CD4-positive, alpha-beta memory T cell (primary cell): ENCODE measurements at regions of chr12 and their contacts with region 1.

Region 1: DNA sequence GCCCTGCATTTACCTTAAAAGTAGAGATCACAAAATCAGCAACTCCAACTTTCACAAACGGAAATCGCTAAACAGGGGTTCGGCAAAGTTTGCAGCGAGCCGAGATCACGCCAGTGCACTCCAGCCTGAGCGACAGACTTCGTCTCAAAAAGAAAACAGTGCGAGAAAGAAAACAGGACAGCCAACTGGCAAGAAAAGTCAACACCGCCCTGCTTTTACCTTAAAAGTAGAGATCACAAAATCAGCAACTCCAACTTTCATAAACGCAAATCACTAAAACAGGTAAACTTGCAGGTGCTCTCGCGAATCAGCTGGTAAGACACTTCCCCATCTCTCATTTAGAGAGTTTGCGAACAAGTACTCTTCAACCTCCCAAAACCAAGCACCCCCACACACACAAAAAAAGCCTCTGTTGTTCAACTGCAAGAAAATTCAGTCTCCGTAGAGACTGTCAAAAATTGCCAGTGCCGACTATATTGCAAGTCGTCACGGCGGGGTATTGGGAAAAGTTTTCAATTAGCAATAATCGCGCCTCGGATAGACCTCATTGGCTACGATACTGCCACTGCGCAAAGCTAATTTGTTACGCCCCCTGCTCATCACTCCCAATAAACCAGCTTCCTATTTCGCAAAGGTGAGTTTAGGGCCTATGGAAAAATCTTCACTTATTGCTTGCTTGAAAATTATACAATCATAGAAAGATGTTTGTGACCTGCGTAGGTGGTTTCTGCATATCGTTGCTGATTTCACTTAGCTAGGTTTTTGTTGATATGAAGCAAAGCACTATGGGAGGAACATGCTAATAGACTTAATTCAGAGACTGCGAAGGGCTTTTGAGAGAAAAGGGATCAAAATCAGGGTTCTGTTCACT is at the start of gene RNU4-1:
- DNase-seq: peak; percentile 87 to 93 (median 91)
- H3K4me3 ChIP-seq: peak within 1 kb of the TSS; percentile 86 to 96
- H3K4me3 Mint-ChIP-seq: no peak within 1 kb of the TSS
- H3K27ac ChIP-seq: peak within 1 kb of the TSS; percentile 99
- H3K27ac Mint-ChIP-seq: no peak within 1 kb of the TSS
- H3K4me1 ChIP-seq: peaks cover 18% of the 10 kb centered on the region
- H3K4me1 Mint-ChIP-seq: peaks cover 6 to 13% (median 8%) of the 10 kb centered on the region in 4 donors
- H3K27me3 ChIP-seq: no peaks in the 10 kb centered on the region
- H3K27me3 Mint-ChIP-seq: no peaks in the 10 kb centered on the region
- total RNA-seq, gene RNU4-1: 925 to 1,200 TPM

Region 2: DNA sequence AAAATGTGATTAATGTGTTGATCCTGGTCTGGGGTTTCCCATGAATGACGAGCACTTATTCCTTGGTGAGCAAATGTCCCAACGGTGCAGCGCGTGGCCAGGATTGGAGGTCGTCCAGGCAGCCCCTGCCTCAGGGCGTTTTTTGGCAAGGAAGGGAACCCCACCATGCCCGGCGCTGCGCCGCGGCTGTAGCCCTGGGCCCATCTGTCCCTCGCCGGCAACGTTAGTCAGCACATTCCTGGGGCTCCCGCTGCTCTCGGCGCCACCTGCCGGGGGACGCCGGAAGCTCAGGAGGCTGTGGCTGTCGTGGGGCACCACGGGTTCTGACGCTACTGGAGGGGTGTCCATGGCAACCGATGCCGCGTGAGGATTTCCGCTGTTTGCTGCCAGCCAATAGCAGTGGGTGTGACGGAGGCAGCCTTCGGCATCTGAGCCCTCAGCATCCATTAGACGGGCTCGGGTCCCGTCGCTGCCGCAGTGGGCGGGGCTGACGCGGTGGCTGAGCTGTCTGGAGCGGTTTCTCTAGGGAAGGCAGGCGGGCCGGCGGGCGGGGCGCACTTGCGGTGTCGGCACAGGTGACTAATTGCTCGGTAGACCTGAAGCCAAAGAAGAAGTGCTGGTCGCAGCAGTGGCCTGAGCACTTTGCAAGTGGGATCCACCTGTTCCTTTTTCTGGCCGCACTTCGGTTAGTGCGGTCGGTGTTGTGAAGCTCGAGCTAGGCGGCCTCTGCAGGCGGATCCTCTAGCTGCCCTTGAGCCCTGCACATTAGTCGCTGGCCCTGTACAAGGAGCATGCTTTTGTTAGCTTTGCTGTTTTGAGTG is 205.9 kb before region 1 on chr12:
- CTCF ChIA-PET with region 1: no interaction called
- POLR2A ChIA-PET with region 1: interaction called, 6 read pairs
- intact Hi-C with region 1: loop called (anchors 1 kb)
- DNase-seq: peak; percentile 99 to 100 (median 100)
- H3K4me3 ChIP-seq: peak overlapping the region; percentile 49 to 52
- H3K4me3 Mint-ChIP-seq: peak overlapping the region; percentile 69 to 86 (median 83)
- H3K27ac ChIP-seq: peak overlapping the region; percentile 58
- H3K27ac Mint-ChIP-seq: peak overlapping the region; percentile 92 to 95 (median 93)
- H3K4me1 ChIP-seq: peaks cover 12% of the 10 kb centered on the region
- H3K4me1 Mint-ChIP-seq: peaks cover 7 to 26% (median 18%) of the 10 kb centered on the region in 4 donors
- H3K27me3 ChIP-seq: no peaks in the 10 kb centered on the region
- H3K27me3 Mint-ChIP-seq: no peaks in the 10 kb centered on the region

Region 3: DNA sequence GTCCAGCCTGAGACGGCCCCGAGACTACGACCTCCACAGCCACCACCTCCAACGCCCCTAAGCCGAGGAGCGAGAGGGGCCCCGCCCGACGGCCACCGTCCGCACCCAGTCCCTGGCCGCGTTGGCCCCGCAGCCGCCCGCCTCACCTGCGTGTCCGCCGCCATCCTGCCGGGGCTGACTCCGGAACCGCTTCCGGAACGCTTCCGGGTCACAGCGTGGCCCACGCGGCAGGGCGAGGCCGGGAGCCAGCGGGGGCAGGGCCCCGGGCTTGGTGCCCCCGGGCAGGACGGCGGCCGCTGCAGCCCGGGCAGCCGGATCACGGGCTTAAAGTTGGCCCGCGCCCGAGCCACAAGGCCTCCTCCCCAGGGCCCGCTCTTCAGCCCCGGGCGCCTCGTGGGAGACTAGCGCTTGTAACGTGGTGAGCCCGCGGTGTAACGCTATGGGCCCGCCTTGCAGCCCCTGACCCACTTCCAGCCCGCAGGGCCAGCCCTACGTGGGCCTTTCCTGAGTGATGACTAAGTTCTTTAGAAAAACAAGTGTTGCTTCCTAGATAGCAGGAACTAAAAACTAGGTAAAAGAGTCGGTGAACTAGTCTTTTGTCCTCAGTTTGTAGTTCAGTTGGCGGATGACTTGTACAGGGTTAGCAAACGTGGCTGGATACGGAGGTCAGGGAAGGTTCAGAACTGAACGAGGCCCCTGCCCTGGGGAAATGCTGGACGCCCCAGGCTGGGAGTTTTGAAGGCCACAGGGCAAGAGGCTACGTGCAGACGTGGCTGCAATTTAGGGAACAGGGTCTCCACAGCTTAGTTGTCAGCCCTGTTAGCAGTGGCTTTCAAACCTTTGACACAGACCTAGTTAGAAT is 98.1 kb before region 1 on chr12 and contains the start of gene GCN1:
- CTCF ChIA-PET with region 1: no interaction called
- POLR2A ChIA-PET with region 1: interaction called, 241 read pairs
- intact Hi-C with region 1: no loop called
- DNase-seq: peak; percentile 87 to 92 (median 89)
- H3K4me3 ChIP-seq: peak within 1 kb of the TSS; percentile 74 to 89
- H3K4me3 Mint-ChIP-seq: peak within 1 kb of the TSS; percentile 86 to 93 (median 90)
- H3K27ac ChIP-seq: peak within 1 kb of the TSS; percentile 79
- H3K27ac Mint-ChIP-seq: peak within 1 kb of the TSS; percentile 97 to 98 (median 98)
- H3K4me1 ChIP-seq: peaks cover 55% of the 10 kb centered on the region
- H3K4me1 Mint-ChIP-seq: peaks cover 30 to 70% (median 40%) of the 10 kb centered on the region in 4 donors
- H3K27me3 ChIP-seq: no peaks in the 10 kb centered on the region
- H3K27me3 Mint-ChIP-seq: no peaks in the 10 kb centered on the region
- total RNA-seq, gene GCN1: 127 to 132 TPM

Region 4: DNA sequence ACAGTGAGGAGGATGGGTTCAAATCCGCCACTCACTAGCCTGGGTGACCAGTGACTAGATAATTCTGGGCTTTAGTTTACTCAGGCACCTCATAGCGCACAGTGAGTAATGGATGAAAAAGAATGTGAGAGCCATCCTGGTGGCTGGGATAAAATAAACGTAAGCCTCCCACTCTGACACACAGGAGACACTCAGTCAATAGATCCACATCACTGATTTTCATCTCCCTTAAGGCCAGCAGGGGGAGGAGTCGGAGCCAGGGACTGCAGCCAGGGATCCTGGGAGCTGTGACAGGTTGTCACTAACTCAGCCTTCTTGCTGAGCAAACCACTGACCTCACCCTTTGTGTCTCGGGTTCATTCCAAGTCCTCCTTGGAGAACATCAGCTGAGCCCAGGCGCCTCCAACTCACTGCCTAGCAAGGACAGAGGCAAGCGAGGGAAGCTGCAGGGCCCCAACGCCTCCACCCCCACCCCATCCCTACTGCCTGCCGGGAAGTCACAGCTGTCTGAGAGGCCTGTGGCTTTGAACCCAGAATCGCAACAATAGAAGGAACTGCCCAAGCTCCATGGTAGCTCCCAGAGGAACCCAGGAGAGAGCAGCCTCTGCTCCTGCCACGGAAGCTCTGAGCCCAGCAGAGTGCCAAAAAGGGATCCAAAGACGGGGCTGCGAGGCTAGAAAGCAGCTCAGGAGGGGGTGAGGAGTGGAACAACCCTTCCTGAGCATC is 58.1 kb before region 1 on chr12:
- CTCF ChIA-PET with region 1: interaction called, 4 read pairs
- POLR2A ChIA-PET with region 1: interaction called, 177 read pairs
- intact Hi-C with region 1: no loop called
- DNase-seq: no peak
- H3K4me3 ChIP-seq: no peak overlapping the region
- H3K4me3 Mint-ChIP-seq: peak overlapping the region in 2 of 8 donors; percentile 7 to 39
- H3K27ac ChIP-seq: no peak overlapping the region
- H3K27ac Mint-ChIP-seq: peak overlapping the region; percentile 27 to 92 (median 73)
- H3K4me1 ChIP-seq: peaks cover 94% of the 10 kb centered on the region
- H3K4me1 Mint-ChIP-seq: peaks cover 51 to 96% (median 78%) of the 10 kb centered on the region in 4 donors
- H3K27me3 ChIP-seq: no peaks in the 10 kb centered on the region
- H3K27me3 Mint-ChIP-seq: no peaks in the 10 kb centered on the region

Region 5: DNA sequence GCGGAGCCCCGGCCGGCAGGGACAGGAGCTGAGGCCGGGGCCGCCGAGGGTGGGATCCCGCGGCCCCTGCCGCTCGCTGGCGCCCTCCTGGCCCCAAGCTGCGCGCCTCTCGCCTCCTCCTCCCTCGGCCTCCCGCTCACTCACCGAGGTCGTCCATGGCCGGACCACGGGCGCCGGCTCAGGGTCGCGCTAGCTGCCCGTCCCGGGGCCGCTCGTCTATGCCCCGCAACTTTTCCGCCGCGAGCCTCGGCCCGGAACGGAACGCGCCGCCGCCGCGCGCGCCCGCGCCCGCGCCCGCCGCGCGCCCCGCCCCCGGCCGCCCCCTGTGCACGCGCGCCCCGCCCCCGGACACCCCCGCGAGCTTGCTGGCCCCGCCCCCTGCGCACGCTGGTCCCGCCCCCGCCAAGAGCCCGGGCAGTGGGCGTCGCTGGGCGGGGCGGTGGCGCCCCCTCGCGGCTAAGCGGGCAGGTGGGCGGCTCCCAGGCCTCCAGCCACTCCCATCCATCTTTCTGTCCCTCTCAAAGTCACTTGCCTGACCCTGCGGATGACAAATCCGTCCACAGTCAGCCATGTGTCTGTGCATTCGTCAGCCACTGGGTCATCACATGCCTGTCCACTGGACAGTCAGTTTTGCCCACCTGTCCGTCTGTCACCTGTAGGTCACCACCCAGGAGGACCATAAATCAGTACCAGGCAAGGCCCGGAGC is 27.3 kb before region 1 on chr12 and contains the start of gene PXN:
- CTCF ChIA-PET with region 1: interaction called, 32 read pairs
- POLR2A ChIA-PET with region 1: interaction called, 176 read pairs
- intact Hi-C with region 1: loop called (anchors 1 kb)
- DNase-seq: peak; percentile 84 to 93 (median 89)
- H3K4me3 ChIP-seq: peak within 1 kb of the TSS; percentile 59 to 85
- H3K4me3 Mint-ChIP-seq: peak within 1 kb of the TSS; percentile 89 to 100 (median 94)
- H3K27ac ChIP-seq: peak within 1 kb of the TSS; percentile 81
- H3K27ac Mint-ChIP-seq: peak within 1 kb of the TSS; percentile 92 to 98 (median 96)
- H3K4me1 ChIP-seq: peaks cover 44% of the 10 kb centered on the region
- H3K4me1 Mint-ChIP-seq: peaks cover 24 to 51% (median 37%) of the 10 kb centered on the region in 4 donors
- H3K27me3 ChIP-seq: no peaks in the 10 kb centered on the region
- H3K27me3 Mint-ChIP-seq: no peaks in the 10 kb centered on the region
- total RNA-seq, gene PXN: 108 to 126 TPM

Region 6: GRCh38 chr12:120469450-120470149 is 176.7 kb after region 1 on chr12 and contains the start of gene SRSF9:
- CTCF ChIA-PET with region 1: interaction called, 3 read pairs
- POLR2A ChIA-PET with region 1: interaction called, 17 read pairs
- intact Hi-C with region 1: no loop called
- DNase-seq: peak; percentile 97 to 98 (median 97)
- H3K4me3 ChIP-seq: peak within 1 kb of the TSS; percentile 75 to 84
- H3K4me3 Mint-ChIP-seq: peak within 1 kb of the TSS; percentile 87 to 94 (median 91)
- H3K27ac ChIP-seq: peak within 1 kb of the TSS; percentile 79
- H3K27ac Mint-ChIP-seq: peak within 1 kb of the TSS; percentile 89 to 97 (median 92)
- H3K4me1 ChIP-seq: peaks cover 40% of the 10 kb centered on the region
- H3K4me1 Mint-ChIP-seq: peaks cover 10 to 62% (median 35%) of the 10 kb centered on the region in 4 donors
- H3K27me3 ChIP-seq: no peaks in the 10 kb centered on the region
- H3K27me3 Mint-ChIP-seq: no peaks in the 10 kb centered on the region
- total RNA-seq, gene SRSF9: 139 to 143 TPM

Region 7: DNA sequence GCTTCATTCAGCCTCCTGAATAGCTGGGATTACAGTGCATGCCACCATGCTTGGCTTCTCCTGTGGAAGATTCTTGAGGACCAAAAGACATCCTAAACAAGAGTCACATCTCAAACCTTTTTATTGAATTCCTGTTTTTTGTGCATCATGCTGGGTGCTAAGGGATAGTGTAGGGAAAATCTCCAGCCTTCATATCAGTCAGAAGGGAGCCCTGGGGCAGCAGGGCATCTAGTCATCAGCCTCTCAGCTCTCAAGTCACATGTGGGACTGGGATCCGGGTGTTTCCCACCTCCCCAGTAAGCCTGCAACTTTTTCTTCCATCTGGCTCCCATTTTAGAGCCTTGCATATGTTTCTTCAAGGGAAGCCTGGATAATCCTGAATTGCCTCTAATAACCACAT is 771.2 kb after region 1 on chr12:
- CTCF ChIA-PET with region 1: no interaction called
- POLR2A ChIA-PET with region 1: no interaction called
- intact Hi-C with region 1: no loop called
- DNase-seq: no peak
- H3K4me3 ChIP-seq: no peak overlapping the region
- H3K4me3 Mint-ChIP-seq: no peak overlapping the region
- H3K27ac ChIP-seq: no peak overlapping the region
- H3K27ac Mint-ChIP-seq: no peak overlapping the region
- H3K4me1 ChIP-seq: peaks cover 4% of the 10 kb centered on the region
- H3K4me1 Mint-ChIP-seq: peaks cover 11 to 16% (median 11%) of the 10 kb centered on the region in 4 donors
- H3K27me3 ChIP-seq: no peaks in the 10 kb centered on the region
- H3K27me3 Mint-ChIP-seq: no peaks in the 10 kb centered on the region

Region 8: GRCh38 chr12:121793838-121794533 is 1501.1 kb after region 1 on chr12:
- CTCF ChIA-PET with region 1: no interaction called
- POLR2A ChIA-PET with region 1: no interaction called
- intact Hi-C with region 1: loop called (anchors 5 kb)
- DNase-seq: peak; percentile 94 to 98 (median 95)
- H3K4me3 ChIP-seq: peak overlapping the region; percentile 67 to 99
- H3K4me3 Mint-ChIP-seq: peak overlapping the region; percentile 78 to 94 (median 87)
- H3K27ac ChIP-seq: peak overlapping the region; percentile 97
- H3K27ac Mint-ChIP-seq: peak overlapping the region; percentile 97 to 99 (median 97)
- H3K4me1 ChIP-seq: peaks cover 64% of the 10 kb centered on the region
- H3K4me1 Mint-ChIP-seq: peaks cover 32 to 72% (median 54%) of the 10 kb centered on the region in 4 donors
- H3K27me3 ChIP-seq: no peaks in the 10 kb centered on the region
- H3K27me3 Mint-ChIP-seq: no peaks in the 10 kb centered on the region